ENCODE measurements at regions of chr11 and their contacts with region 1.

Region 1: GRCh38 chr11:131748151-131749050 is 378.0 kb downstream of the NTM start:
- DNase-seq: peak in 1 of 2 experiments; percentile 83
- H3K4me3 ChIP-seq: no peak overlapping the region
- H3K27ac ChIP-seq: no peak overlapping the region
- H3K4me1 ChIP-seq: peaks cover 0 to 2% (median 0%) of the 10 kb centered on the region in 4 experiments; a peak in 2 of 7 replicates
- H3K27me3 ChIP-seq: no peaks in the 10 kb centered on the region
- CTCF ChIP-seq: peak; percentile 76 to 89 (median 82)
- EP300 ChIP-seq: no peak
- POLR2A ChIP-seq: no peak
- RAD21 ChIP-seq: peak; percentile 87 to 88

Region 2: DNA sequence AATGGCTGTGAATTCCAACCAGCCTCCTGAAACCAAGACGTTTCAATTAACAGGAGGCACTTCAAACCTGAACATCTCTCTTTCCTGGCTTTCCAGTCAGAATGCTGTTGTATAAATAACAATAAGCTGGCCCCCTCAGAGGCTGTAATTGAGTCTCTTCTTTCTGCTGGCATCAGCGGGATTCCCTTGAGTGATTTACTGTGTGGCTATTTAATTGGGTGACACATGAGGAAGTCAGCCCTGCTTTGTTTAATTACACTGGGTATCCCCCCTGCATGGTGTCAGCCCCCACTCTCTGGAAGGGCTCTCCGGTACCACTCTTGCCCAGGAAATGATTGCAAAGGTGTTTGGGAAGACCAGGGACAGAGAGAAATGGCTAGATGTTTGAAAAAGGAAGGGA is 276.4 kb before region 1 on chr11:
- CTCF ChIA-PET with region 1: no interaction called
- POLR2A ChIA-PET with region 1: no interaction called
- DNase-seq: no peak
- H3K4me3 ChIP-seq: no peak overlapping the region
- H3K27ac ChIP-seq: no peak overlapping the region
- H3K4me1 ChIP-seq: peaks cover 3 to 12% (median 6%) of the 10 kb centered on the region in 4 experiments; a peak in 5 of 7 replicates
- H3K27me3 ChIP-seq: no peaks in the 10 kb centered on the region; a peak in 1 of 7 replicates
- CTCF ChIP-seq: no peak
- EP300 ChIP-seq: no peak
- POLR2A ChIP-seq: no peak
- RAD21 ChIP-seq: no peak

Region 3: DNA sequence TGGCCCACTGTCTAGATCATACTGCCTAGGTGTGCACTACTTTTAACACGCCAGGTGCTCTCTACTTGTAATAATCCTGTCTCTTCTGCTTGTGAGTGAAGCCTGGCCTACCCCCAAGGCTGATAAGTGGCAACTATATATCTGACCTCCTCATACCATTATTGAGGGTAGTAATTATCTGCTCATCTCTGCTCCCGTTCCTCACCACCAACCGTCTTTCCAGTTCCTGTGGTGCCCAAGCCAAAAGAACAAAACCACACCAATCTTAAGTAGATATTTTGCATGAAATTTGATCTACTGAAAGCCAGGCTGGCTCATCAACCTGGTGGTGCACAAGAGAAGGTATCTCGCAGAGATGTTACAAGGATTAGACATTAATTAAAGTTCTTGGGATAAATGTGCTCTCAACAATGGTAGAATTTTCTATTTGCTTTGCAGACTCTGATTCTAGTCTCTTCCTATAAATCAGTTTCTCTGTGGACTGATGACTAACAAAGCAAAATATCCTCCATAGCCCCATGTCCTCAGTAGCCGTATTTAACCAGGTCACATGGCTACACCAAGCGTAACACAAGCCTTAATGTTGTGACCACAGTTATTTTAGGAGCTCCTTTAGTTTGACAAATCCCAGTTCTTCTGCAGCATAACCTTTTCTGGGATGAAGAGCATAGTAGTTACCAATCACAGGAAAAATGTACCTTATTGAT is 110.8 kb before region 1 on chr11:
- CTCF ChIA-PET with region 1: no interaction called
- POLR2A ChIA-PET with region 1: no interaction called
- DNase-seq: no peak
- H3K4me3 ChIP-seq: no peak overlapping the region
- H3K27ac ChIP-seq: no peak overlapping the region
- H3K4me1 ChIP-seq: peaks cover 5 to 20% (median 15%) of the 10 kb centered on the region in 4 experiments; a peak in 4 of 7 replicates
- H3K27me3 ChIP-seq: no peaks in the 10 kb centered on the region
- CTCF ChIP-seq: no peak
- EP300 ChIP-seq: no peak
- POLR2A ChIP-seq: no peak
- RAD21 ChIP-seq: no peak

Region 4: DNA sequence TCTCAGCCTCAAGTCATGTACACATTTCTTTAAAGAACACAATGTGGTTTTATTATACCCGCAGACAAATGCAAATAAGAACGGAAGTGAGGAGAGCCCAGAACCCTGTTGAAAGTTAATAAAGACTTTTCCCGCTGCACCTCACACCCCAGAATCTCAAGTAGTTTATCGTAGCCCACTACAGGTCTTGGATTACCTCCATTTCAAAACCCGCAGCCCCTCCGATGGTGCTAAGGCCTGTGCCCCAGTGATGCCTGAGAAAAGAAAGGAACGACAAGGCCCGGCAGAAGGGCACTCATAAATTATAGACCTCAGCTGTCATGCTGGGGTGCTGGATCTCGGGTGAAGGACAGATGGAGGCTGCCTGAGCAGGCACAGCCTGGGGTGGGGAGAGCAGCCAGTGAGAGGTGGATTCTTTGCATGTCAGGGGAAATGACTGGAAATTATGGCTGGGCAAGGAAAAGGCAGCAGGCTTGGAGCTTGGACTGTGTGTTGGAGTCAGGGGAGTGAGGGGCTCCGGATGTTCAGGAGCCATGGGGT is 23.9 kb before region 1 on chr11:
- CTCF ChIA-PET with region 1: interaction called, 19 read pairs
- POLR2A ChIA-PET with region 1: no interaction called
- DNase-seq: no peak
- H3K4me3 ChIP-seq: no peak overlapping the region
- H3K27ac ChIP-seq: no peak overlapping the region
- H3K4me1 ChIP-seq: no peaks in the 10 kb centered on the region
- H3K27me3 ChIP-seq: no peaks in the 10 kb centered on the region
- CTCF ChIP-seq: no peak
- EP300 ChIP-seq: no peak
- POLR2A ChIP-seq: no peak
- RAD21 ChIP-seq: no peak

Region 5: DNA sequence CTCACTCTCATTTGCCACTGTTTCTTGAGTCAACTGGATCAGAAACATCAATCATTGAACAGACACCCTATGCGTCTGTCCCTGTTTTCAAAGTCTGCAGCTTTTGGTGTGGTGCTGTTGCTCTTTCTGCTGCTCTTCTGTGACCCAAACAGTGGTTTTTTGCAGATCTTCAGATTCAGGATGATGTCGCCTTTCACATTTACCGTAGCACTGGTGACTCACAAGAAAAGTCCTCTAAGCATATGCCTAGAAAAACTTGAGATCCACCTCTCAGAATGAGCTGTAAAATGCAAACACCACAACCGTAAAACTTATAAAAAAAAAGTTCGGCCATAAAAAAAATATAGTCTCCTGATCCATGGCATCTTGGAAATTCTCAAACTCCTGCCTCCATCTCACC is 22.4 kb after region 1 on chr11:
- CTCF ChIA-PET with region 1: interaction called, 74 read pairs
- POLR2A ChIA-PET with region 1: no interaction called
- DNase-seq: no peak
- H3K4me3 ChIP-seq: no peak overlapping the region
- H3K27ac ChIP-seq: no peak overlapping the region
- H3K4me1 ChIP-seq: peaks cover 0 to 4% (median 0%) of the 10 kb centered on the region in 4 experiments; a peak in 3 of 7 replicates
- H3K27me3 ChIP-seq: no peaks in the 10 kb centered on the region
- CTCF ChIP-seq: no peak
- EP300 ChIP-seq: no peak
- POLR2A ChIP-seq: no peak
- RAD21 ChIP-seq: no peak

Region 6: GRCh38 chr11:131859538-131860210 is 111.3 kb after region 1 on chr11:
- CTCF ChIA-PET with region 1: interaction called, 86 read pairs
- POLR2A ChIA-PET with region 1: no interaction called
- DNase-seq: no peak
- H3K4me3 ChIP-seq: no peak overlapping the region
- H3K27ac ChIP-seq: no peak overlapping the region
- H3K4me1 ChIP-seq: peaks cover 2 to 10% (median 6%) of the 10 kb centered on the region in 4 experiments; a peak in 6 of 7 replicates
- H3K27me3 ChIP-seq: no peaks in the 10 kb centered on the region
- CTCF ChIP-seq: no peak
- EP300 ChIP-seq: no peak
- POLR2A ChIP-seq: no peak
- RAD21 ChIP-seq: no peak

Region 7: DNA sequence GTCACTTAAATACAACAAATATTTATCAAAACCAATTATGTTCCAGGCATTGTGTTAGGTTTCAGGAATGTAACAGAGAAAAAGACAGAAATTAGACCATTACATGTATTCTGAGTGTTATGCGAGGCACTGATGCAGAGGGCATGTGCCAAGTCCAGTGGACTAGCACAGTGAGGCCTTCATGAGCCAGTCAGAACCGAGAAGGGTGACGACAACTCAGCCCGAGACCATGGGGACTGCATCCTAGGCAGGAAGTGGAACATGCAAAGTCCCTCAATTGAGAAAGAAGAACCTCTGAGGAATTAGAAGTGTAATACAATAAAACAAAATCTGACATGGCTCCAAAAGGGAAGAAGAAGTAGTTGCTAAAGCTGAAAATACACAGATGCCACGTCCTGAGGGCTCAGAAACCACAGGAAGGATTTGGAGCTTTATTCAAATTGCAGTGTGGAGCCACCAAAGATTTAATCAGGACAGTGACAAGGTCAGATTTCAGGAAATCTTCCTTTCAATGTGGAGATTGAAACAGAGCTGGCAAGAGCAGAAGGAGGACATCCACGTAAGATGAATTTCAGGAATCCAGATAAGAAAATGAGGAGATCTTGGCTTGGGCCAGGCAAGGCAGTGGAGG is 151.7 kb after region 1 on chr11:
- CTCF ChIA-PET with region 1: interaction called, 15 read pairs
- POLR2A ChIA-PET with region 1: no interaction called
- DNase-seq: no peak
- H3K4me3 ChIP-seq: no peak overlapping the region
- H3K27ac ChIP-seq: no peak overlapping the region
- H3K4me1 ChIP-seq: peaks cover 0 to 8% (median 0%) of the 10 kb centered on the region in 4 experiments; a peak in 2 of 7 replicates
- H3K27me3 ChIP-seq: no peaks in the 10 kb centered on the region
- CTCF ChIP-seq: no peak
- EP300 ChIP-seq: no peak
- POLR2A ChIP-seq: no peak
- RAD21 ChIP-seq: no peak